Gastrocnemius medialis (tissue), 4 donors: ENCODE measurements at regions of chr11 and their contacts with region 1.

Region 1: GRCh38 chr11:130653838-130654636 is 205.6 kb downstream of the ADAMTS15 start:
- DNase-seq: peak; percentile 52 to 79
- ATAC-seq: peak; percentile 73 to 79
- H3K4me3 ChIP-seq: no peak overlapping the region
- H3K27ac ChIP-seq: peak overlapping the region; percentile 65 to 79 (median 74)
- H3K4me1 ChIP-seq: peaks cover 15 to 19% of the 10 kb centered on the region in 2 donors
- H3K27me3 ChIP-seq: no peaks in the 10 kb centered on the region
- CTCF ChIP-seq: no peak
- POLR2A ChIP-seq: no peak

Region 2: DNA sequence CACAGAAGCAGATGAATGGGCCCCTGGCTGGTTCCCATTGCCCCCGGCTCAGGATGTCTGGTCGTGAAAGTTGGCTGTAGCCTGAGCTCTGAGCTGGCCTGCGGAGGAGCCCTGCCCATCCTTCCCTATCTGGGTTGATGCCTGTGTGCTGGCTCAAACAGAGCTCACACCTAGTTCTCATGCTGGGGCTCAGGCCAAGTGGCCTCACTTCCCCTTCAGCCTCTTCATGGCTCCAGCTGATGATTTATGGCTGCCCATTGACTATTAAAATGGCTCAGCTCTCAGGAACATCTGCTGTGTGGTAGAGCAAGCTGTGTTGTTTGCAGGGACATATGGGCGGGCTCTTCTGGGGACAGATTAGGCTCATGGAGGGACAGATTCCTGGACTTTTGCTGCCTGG is 140.9 kb before region 1 on chr11:
- in situ Hi-C with region 1: no loop called
- intact Hi-C with region 1: loop called (anchors 2 kb)
- DNase-seq: peak; percentile 90 to 94
- ATAC-seq: peak; percentile 78 to 82
- H3K4me3 ChIP-seq: no peak overlapping the region
- H3K27ac ChIP-seq: peak overlapping the region; percentile 61 to 86 (median 81)
- H3K4me1 ChIP-seq: peaks cover 41 to 46% of the 10 kb centered on the region in 2 donors
- H3K27me3 ChIP-seq: no peaks in the 10 kb centered on the region
- CTCF ChIP-seq: no peak
- POLR2A ChIP-seq: no peak